ENCODE measurements at regions of chr4 and their contacts with region 1.

Region 1: DNA sequence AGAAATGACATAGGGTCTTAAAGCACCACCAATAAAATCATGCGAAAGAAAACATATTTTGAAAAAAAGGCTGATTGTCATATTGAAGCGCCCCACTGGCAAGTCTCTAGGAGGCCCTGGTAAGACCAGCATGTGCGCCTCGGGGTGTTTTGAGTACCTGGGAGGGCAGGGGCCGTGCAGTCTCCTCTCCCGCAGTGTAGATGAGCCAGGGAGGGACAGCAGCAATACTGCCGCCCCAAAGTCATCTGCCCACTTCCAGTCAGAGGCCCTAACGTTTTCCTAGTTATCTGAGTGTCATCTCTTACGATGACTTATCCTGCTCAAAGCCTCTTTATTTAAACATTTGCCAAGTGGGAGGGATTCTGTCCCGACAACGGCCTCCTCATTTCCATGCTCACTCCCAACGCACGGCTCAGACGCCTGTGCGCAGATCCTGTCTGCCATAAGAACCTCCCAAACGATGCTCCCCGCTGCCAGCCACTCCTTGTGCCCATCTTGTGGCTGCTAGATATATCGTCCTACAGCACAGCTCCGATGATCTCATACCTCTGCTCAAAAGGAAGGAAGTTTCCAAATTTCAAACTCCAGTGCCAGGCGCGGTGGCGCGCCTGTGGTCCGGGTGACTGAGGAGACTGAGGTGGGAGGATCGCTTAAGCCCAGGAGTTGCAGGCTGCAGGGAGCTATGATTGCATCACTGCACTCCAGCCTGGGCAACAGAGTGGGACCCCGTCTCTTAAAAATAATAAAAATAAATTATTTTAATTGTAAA is 17.2 kb upstream of the SCRG1 start:
- DNase-seq: peak in 1 of 4 donors; percentile 71
- ATAC-seq: no peak
- H3K4me3 ChIP-seq: no peak overlapping the region
- H3K27ac ChIP-seq: peak overlapping the region in 1 of 4 donors; percentile 66
- H3K4me1 ChIP-seq: peaks cover 3% of the 10 kb centered on the region
- H3K27me3 ChIP-seq: no peaks in the 10 kb centered on the region
- CTCF ChIP-seq: peak in 1 of 7 experiments; percentile 17
- POLR2A ChIP-seq: peak in 1 of 3 donors; percentile 42

Region 2: GRCh38 chr4:173013232-173013930 is 402.7 kb before region 1 on chr4:
- intact Hi-C with region 1: loop called (anchors 10 kb)
- DNase-seq: peak; percentile 34 to 58 (median 52)
- ATAC-seq: peak; percentile 62
- H3K4me3 ChIP-seq: no peak overlapping the region
- H3K27ac ChIP-seq: no peak overlapping the region
- H3K4me1 ChIP-seq: no peaks in the 10 kb centered on the region
- H3K27me3 ChIP-seq: no peaks in the 10 kb centered on the region
- CTCF ChIP-seq: peak; percentile 61 to 86 (median 67)
- POLR2A ChIP-seq: no peak

Region 3: DNA sequence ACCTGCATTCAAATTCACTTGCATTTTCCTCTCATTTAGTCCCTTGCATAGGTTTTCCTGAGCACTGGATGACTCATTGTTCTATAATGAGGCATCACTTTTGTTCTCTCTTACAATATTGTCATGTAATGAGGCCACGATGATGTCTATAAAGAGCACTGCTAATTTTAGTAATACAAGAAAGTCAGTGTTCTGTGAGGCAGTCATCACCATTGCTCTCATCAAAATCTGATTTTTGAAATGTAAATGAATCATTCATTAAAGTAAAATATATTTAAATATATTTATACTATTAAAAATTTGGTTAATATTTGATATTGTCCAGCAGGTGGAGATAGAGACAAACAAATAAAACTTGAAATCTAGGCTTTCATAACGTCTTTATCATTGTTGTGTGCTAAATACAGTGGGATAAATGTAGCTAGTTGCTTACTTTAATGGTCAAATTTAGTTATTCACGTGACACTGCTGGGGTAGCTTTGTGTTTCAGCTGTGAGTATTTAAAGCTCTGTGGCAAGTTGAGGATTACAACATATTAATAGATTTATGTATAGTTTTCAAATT is 97.3 kb before region 1 on chr4:
- intact Hi-C with region 1: loop called (anchors 5 kb)
- DNase-seq: no peak
- ATAC-seq: peak; percentile 50
- H3K4me3 ChIP-seq: no peak overlapping the region
- H3K27ac ChIP-seq: no peak overlapping the region
- H3K4me1 ChIP-seq: no peaks in the 10 kb centered on the region
- H3K27me3 ChIP-seq: no peaks in the 10 kb centered on the region
- CTCF ChIP-seq: peak in 6 of 7 experiments; percentile 25 to 47 (median 40)
- POLR2A ChIP-seq: no peak

Region 4: DNA sequence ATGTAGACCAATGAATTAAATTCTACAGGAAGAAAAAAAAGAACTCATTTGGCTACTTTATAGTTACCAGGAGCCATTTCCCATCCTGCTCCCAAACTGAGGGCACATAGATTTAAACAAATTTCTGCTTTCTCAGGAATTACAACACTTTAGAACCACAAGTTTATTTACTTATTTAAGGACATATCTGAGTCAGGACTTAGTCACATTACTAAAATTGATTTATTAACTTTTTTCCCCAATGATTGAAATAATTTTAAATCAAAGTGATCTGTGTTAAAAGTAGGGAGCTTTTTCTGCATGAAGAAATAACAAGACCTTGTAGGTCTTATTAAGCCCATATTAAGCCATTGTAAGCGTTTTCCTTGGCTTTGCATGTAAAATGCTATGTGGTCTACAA is 405.0 kb after region 1 on chr4:
- intact Hi-C with region 1: no loop called
- DNase-seq: no peak
- ATAC-seq: no peak
- H3K4me3 ChIP-seq: no peak overlapping the region
- H3K27ac ChIP-seq: no peak overlapping the region
- H3K4me1 ChIP-seq: no peaks in the 10 kb centered on the region
- H3K27me3 ChIP-seq: no peaks in the 10 kb centered on the region
- CTCF ChIP-seq: no peak
- POLR2A ChIP-seq: no peak

Measured in body of pancreas (tissue), 4 donors.